ENCODE measurements at regions of chr3 and their contacts with region 1.

Region 1: GRCh38 chr3:156674046-156674910 is at the start of gene TIPARP:
- DNase-seq: peak; percentile 99
- H3K4me3 ChIP-seq: peak within 1 kb of the TSS; percentile 93
- H3K4me3 Mint-ChIP-seq: peak within 1 kb of the TSS; percentile 90 to 98 (median 97)
- H3K27ac ChIP-seq: peak within 1 kb of the TSS; percentile 95
- H3K27ac Mint-ChIP-seq: peak within 1 kb of the TSS; percentile 86 to 99 (median 98)
- H3K4me1 ChIP-seq: peaks cover 35% of the 10 kb centered on the region
- H3K4me1 Mint-ChIP-seq: peaks cover 40 to 44% (median 42%) of the 10 kb centered on the region in 3 donors
- H3K27me3 ChIP-seq: no peaks in the 10 kb centered on the region
- H3K27me3 Mint-ChIP-seq: no peaks in the 10 kb centered on the region
- total RNA-seq, gene TIPARP: 36.0 to 37.0 TPM

Region 2: GRCh38 chr3:156547637-156548036 is 126.6 kb before region 1 on chr3:
- CTCF ChIA-PET with region 1: interaction called, 12 read pairs
- POLR2A ChIA-PET with region 1: interaction called, 7 read pairs
- DNase-seq: no peak
- H3K4me3 ChIP-seq: no peak overlapping the region
- H3K4me3 Mint-ChIP-seq: no peak overlapping the region
- H3K27ac ChIP-seq: no peak overlapping the region
- H3K27ac Mint-ChIP-seq: peak overlapping the region in 4 of 8 donors; percentile 1 to 75 (median 42)
- H3K4me1 ChIP-seq: peaks cover 8% of the 10 kb centered on the region
- H3K4me1 Mint-ChIP-seq: peaks cover 47 to 71% (median 70%) of the 10 kb centered on the region in 3 donors
- H3K27me3 ChIP-seq: no peaks in the 10 kb centered on the region
- H3K27me3 Mint-ChIP-seq: no peaks in the 10 kb centered on the region

Region 3: DNA sequence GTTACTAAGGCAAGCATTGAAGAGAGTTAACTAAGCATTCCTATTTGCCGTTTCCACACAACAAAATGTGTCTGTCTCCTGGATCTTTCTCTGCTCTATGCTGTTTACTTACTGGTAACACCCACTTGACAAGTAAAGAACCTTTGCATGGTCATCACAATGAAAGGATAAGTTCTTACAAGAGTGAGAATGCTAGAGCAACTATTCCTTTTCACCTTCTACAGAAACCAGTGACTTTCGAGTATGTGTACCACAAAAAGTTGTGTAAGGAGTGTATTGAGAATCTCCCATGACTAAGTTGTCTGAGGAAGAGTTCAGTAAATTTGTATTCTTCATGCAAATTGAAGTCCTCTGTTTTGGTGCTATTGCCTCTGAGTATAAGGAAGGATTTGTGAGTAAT is 10.9 kb after region 1 on chr3:
- CTCF ChIA-PET with region 1: interaction called, 5 read pairs
- POLR2A ChIA-PET with region 1: interaction called, 14 read pairs
- DNase-seq: no peak
- H3K4me3 ChIP-seq: no peak overlapping the region
- H3K4me3 Mint-ChIP-seq: peak overlapping the region; percentile 30 to 67 (median 62)
- H3K27ac ChIP-seq: no peak overlapping the region
- H3K27ac Mint-ChIP-seq: peak overlapping the region in 3 of 8 donors; percentile 40 to 62 (median 54)
- H3K4me1 ChIP-seq: peaks cover 81% of the 10 kb centered on the region
- H3K4me1 Mint-ChIP-seq: peaks cover 81 to 96% (median 96%) of the 10 kb centered on the region in 3 donors
- H3K27me3 ChIP-seq: no peaks in the 10 kb centered on the region
- H3K27me3 Mint-ChIP-seq: no peaks in the 10 kb centered on the region

Region 4: GRCh38 chr3:157081681-157082210 is 407.5 kb after region 1 on chr3:
- CTCF ChIA-PET with region 1: interaction called, 43 read pairs
- POLR2A ChIA-PET with region 1: interaction called, 4 read pairs
- DNase-seq: peak; percentile 76 to 92 (median 81)
- H3K4me3 ChIP-seq: no peak overlapping the region
- H3K4me3 Mint-ChIP-seq: peak overlapping the region in 4 of 7 donors; percentile 19 to 70 (median 33)
- H3K27ac ChIP-seq: peak overlapping the region; percentile 25
- H3K27ac Mint-ChIP-seq: peak overlapping the region; percentile 86 to 94 (median 89)
- H3K4me1 ChIP-seq: peaks cover 11% of the 10 kb centered on the region
- H3K4me1 Mint-ChIP-seq: peaks cover 21 to 36% (median 33%) of the 10 kb centered on the region in 3 donors
- H3K27me3 ChIP-seq: no peaks in the 10 kb centered on the region
- H3K27me3 Mint-ChIP-seq: no peaks in the 10 kb centered on the region

Region 5: GRCh38 chr3:157130467-157131251 is 456.4 kb after region 1 on chr3:
- CTCF ChIA-PET with region 1: interaction called, 24 read pairs
- POLR2A ChIA-PET with region 1: interaction called, 5 read pairs
- DNase-seq: peak; percentile 62 to 87 (median 80)
- H3K4me3 ChIP-seq: peak overlapping the region; percentile 15
- H3K4me3 Mint-ChIP-seq: peak overlapping the region; percentile 13 to 91 (median 76)
- H3K27ac ChIP-seq: peak overlapping the region; percentile 68
- H3K27ac Mint-ChIP-seq: peak overlapping the region; percentile 96 to 98 (median 97)
- H3K4me1 ChIP-seq: peaks cover 59% of the 10 kb centered on the region
- H3K4me1 Mint-ChIP-seq: peaks cover 75 to 96% (median 90%) of the 10 kb centered on the region in 3 donors
- H3K27me3 ChIP-seq: no peaks in the 10 kb centered on the region
- H3K27me3 Mint-ChIP-seq: no peaks in the 10 kb centered on the region